Activated CD4-positive, alpha-beta T cell treated with anti-CD3 and anti-CD28 coated beads for 36 hours (primary cell): ENCODE measurements at regions of chr2 and their contacts with region 1.

Region 1: GRCh38 chr2:154670083-154670482 is 28.4 kb upstream of the KCNJ3 start:
- DNase-seq: no peak
- ATAC-seq: no peak
- H3K4me3 Mint-ChIP-seq: no peak overlapping the region
- H3K27ac Mint-ChIP-seq: no peak overlapping the region
- H3K4me1 Mint-ChIP-seq: no peaks in the 10 kb centered on the region
- H3K27me3 Mint-ChIP-seq: no peaks in the 10 kb centered on the region

Region 2: DNA sequence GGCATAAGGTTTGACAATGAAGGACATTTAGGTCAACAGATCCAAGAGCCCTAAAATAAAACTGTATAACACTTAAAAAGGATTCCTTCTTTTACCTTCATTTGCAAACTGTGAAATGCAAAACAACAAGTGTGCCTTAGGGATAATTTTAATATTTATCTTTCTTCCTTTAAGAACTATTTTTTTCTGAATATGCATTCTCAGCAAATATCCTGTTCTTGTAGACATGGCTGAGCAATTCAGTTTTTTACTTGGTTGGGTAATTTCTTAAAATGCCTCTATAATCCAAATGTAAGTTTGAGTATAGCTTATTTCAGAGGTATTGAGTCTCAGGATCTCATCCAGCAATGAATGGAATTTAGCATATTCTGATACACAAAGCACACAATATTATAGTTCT is 14.6 kb before region 1 on chr2:
- CTCF ChIA-PET with region 1: no interaction called
- POLR2A ChIA-PET with region 1: interaction called, 5 read pairs
- intact Hi-C with region 1: loop called in 1 of 2 experiments (anchors 1 kb)
- DNase-seq: no peak
- ATAC-seq: no peak
- H3K4me3 Mint-ChIP-seq: no peak overlapping the region
- H3K27ac Mint-ChIP-seq: no peak overlapping the region
- H3K4me1 Mint-ChIP-seq: no peaks in the 10 kb centered on the region
- H3K27me3 Mint-ChIP-seq: no peaks in the 10 kb centered on the region